ENCODE measurements at regions of chr17 and their contacts with region 1.

Region 1: DNA sequence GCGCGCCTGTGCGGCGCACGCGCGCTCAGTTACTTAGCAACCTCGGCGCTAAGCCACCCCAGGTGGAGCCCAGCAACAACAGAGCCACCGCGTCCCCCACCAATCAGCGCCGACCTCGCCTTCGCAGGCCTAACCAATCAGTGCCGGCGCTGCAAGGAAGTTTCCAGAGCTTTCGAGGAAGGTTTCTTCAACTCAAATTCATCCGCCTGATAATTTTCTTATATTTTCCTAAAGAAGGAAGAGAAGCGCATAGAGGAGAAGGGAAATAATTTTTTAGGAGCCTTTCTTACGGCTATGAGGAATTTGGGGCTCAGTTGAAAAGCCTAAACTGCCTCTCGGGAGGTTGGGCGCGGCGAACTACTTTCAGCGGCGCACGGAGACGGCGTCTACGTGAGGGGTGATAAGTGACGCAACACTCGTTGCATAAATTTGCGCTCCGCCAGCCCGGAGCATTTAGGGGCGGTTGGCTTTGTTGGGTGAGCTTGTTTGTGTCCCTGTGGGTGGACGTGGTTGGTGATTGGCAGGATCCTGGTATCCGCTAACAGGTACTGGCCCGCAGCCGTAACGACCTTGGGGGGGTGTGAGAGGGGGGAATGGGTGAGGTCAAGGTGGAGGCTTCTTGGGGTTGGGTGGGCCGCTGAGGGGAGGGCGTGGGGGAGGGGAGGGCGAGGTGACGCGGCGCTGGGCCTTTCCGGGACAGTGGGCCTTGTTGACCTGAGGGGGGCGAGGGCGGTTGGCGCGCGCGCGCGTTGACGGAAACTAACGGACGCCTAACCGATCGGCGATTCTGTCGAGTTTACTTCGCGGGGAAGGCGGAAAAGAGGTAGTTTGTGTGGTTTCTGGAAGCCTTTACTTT is at the start of gene UBB:
- DNase-seq: peak; percentile 83 to 97 (median 94)
- ATAC-seq: peak; percentile 96
- H3K4me3 ChIP-seq: peak within 1 kb of the TSS; percentile 66
- H3K4me3 Mint-ChIP-seq: peak within 1 kb of the TSS; percentile 85 to 99 (median 95)
- H3K27ac ChIP-seq: peak within 1 kb of the TSS; percentile 86
- H3K27ac Mint-ChIP-seq: peak within 1 kb of the TSS; percentile 93 to 100 (median 97)
- H3K4me1 ChIP-seq: peaks cover 6 to 13% of the 10 kb centered on the region in 2 donors
- H3K4me1 Mint-ChIP-seq: peaks cover 22 to 48% (median 39%) of the 10 kb centered on the region in 7 donors
- H3K27me3 ChIP-seq: no peaks in the 10 kb centered on the region
- H3K27me3 Mint-ChIP-seq: peaks cover 0 to 5% (median 0%) of the 10 kb centered on the region in 5 donors
- total RNA-seq, gene UBB: 537 to 1,283 (median 621) TPM

Region 2: GRCh38 chr17:15928348-15928740 is 452.5 kb before region 1 on chr17:
- CTCF ChIA-PET with region 1: no interaction called
- POLR2A ChIA-PET with region 1: no interaction called
- intact Hi-C with region 1: no loop called
- DNase-seq: no peak
- ATAC-seq: no peak
- H3K4me3 ChIP-seq: no peak overlapping the region
- H3K4me3 Mint-ChIP-seq: no peak overlapping the region
- H3K27ac ChIP-seq: no peak overlapping the region
- H3K27ac Mint-ChIP-seq: no peak overlapping the region
- H3K4me1 ChIP-seq: no peaks in the 10 kb centered on the region
- H3K4me1 Mint-ChIP-seq: peaks cover 0 to 17% (median 0%) of the 10 kb centered on the region in 7 donors
- H3K27me3 ChIP-seq: no peaks in the 10 kb centered on the region
- H3K27me3 Mint-ChIP-seq: peaks cover 13 to 39% (median 26%) of the 10 kb centered on the region in 5 donors

Region 3: GRCh38 chr17:16353317-16354174 is 27.3 kb before region 1 on chr17 and contains the start of gene CENPV:
- CTCF ChIA-PET with region 1: interaction called, 7 read pairs
- POLR2A ChIA-PET with region 1: interaction called, 14 read pairs
- intact Hi-C with region 1: loop called in 1 of 2 experiments (anchors 2 kb)
- DNase-seq: peak; percentile 62 to 76 (median 71)
- ATAC-seq: peak; percentile 96
- H3K4me3 ChIP-seq: peak within 1 kb of the TSS; percentile 78
- H3K4me3 Mint-ChIP-seq: peak within 1 kb of the TSS; percentile 89 to 98 (median 95)
- H3K27ac ChIP-seq: peak within 1 kb of the TSS; percentile 73
- H3K27ac Mint-ChIP-seq: peak within 1 kb of the TSS; percentile 73 to 98 (median 86)
- H3K4me1 ChIP-seq: peaks cover 4 to 5% of the 10 kb centered on the region in 2 donors
- H3K4me1 Mint-ChIP-seq: peaks cover 11 to 23% (median 19%) of the 10 kb centered on the region in 7 donors
- H3K27me3 ChIP-seq: no peaks in the 10 kb centered on the region
- H3K27me3 Mint-ChIP-seq: peaks cover 0 to 27% (median 0%) of the 10 kb centered on the region in 5 donors
- total RNA-seq, gene CENPV: 9.8 to 30.3 (median 21.7) TPM

Region 4: DNA sequence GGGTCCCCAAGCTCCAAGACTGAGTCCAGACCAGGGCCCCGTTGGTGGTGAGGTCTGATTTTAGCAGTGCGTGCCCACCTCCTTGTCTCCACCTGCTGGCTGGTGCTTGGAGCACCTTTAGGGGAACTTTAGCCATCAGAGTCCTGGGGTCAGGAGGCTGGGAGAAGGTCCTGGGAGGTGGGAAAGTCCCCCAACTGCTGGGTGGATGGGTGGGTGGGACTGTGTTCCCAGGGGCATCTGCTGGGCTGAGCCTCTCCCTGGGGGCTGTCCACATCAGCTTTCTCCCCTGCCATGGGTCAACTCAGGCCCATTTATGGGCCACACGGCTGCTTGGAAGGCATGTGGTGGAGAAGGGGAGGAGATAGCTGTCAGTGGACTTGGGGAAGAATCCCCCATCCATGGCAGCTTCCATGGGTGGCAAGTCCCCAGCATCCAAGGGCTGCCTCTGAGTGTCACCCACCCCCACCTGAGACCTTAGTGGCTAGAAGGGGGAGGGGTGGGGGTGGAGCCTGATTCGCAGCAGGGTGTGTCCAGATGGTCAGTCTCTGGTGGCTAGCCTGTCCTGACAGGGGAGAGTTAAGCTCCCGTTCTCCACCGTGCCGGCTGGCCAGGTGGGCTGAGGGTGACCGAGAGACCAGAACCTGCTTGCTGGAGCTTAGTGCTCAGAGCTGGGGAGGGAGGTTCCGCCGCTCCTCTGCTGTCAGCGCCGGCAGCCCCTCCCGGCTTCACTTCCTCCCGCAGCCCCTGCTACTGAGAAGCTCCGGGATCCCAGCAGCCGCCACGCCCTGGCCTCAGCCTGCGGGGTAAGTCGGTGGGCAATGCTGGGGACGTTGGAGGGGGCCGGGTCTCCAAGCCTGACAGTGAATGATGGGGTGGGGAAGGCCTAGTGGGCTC is 34.4 kb after region 1 on chr17 and contains the start of gene TRPV2:
- CTCF ChIA-PET with region 1: interaction called, 12 read pairs
- POLR2A ChIA-PET with region 1: interaction called, 36 read pairs
- intact Hi-C with region 1: loop called (anchors 1 kb)
- DNase-seq: peak in 8 of 9 donors; percentile 36 to 58 (median 47)
- ATAC-seq: peak; percentile 57
- H3K4me3 ChIP-seq: peak within 1 kb of the TSS; percentile 93
- H3K4me3 Mint-ChIP-seq: peak within 1 kb of the TSS; percentile 90 to 100 (median 98)
- H3K27ac ChIP-seq: peak within 1 kb of the TSS; percentile 94
- H3K27ac Mint-ChIP-seq: peak within 1 kb of the TSS; percentile 96 to 100 (median 98)
- H3K4me1 ChIP-seq: peaks cover 37 to 47% of the 10 kb centered on the region in 2 donors
- H3K4me1 Mint-ChIP-seq: peaks cover 33 to 55% (median 42%) of the 10 kb centered on the region in 7 donors
- H3K27me3 ChIP-seq: no peaks in the 10 kb centered on the region
- H3K27me3 Mint-ChIP-seq: no peaks in the 10 kb centered on the region
- total RNA-seq, gene TRPV2: 66.8 to 141 (median 80.0) TPM

Region 5: DNA sequence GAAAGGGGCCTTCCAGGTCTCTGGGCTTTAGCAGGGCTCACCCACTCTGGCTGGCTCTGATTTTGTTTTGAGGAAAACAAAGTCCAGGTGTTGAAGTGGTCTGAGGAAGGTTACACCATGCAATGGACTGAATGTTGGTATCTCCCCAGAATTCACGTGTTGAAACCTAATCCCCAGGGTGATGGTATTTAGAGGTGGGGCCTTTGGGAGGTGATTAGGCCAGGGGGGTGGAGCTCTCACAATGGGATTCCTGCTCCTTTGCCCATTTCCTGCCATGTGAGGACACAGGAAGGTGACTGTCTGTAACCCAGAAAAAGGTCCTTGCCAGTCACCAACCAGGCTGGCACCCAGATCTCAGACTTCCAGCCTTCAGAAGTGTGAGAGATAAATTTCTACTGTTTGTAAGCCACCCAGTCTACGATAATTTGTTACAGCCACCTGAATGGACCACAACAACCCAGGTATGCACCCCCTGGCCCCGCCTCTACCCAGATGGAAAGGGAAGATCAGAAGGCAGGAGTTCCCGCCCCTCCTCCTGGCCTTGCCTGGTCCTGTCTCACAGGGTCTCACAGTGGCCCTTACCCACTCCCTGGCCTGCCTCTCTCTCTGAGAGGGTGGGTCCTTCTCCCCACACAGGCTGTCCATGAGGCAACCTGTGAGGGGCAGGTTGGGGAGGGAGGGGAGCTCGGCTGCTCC is 79.1 kb after region 1 on chr17:
- CTCF ChIA-PET with region 1: no interaction called
- POLR2A ChIA-PET with region 1: no interaction called
- intact Hi-C with region 1: no loop called
- DNase-seq: peak in 1 of 9 donors; percentile 2
- ATAC-seq: no peak
- H3K4me3 ChIP-seq: no peak overlapping the region
- H3K4me3 Mint-ChIP-seq: no peak overlapping the region
- H3K27ac ChIP-seq: no peak overlapping the region
- H3K27ac Mint-ChIP-seq: no peak overlapping the region
- H3K4me1 ChIP-seq: no peaks in the 10 kb centered on the region
- H3K4me1 Mint-ChIP-seq: peaks cover 0 to 7% (median 4%) of the 10 kb centered on the region in 7 donors
- H3K27me3 ChIP-seq: no peaks in the 10 kb centered on the region
- H3K27me3 Mint-ChIP-seq: no peaks in the 10 kb centered on the region

Region 6: GRCh38 chr17:16521070-16521727 is 140.3 kb after region 1 on chr17:
- CTCF ChIA-PET with region 1: interaction called, 5 read pairs
- POLR2A ChIA-PET with region 1: interaction called, 3 read pairs
- intact Hi-C with region 1: loop called (anchors 1 kb)
- DNase-seq: peak; percentile 21 to 71 (median 62)
- ATAC-seq: peak; percentile 95
- H3K4me3 ChIP-seq: no peak overlapping the region
- H3K4me3 Mint-ChIP-seq: no peak overlapping the region
- H3K27ac ChIP-seq: no peak overlapping the region
- H3K27ac Mint-ChIP-seq: peak overlapping the region in 1 of 9 donors; percentile 2
- H3K4me1 ChIP-seq: no peaks in the 10 kb centered on the region
- H3K4me1 Mint-ChIP-seq: peaks cover 0 to 13% (median 5%) of the 10 kb centered on the region in 7 donors
- H3K27me3 ChIP-seq: no peaks in the 10 kb centered on the region
- H3K27me3 Mint-ChIP-seq: peaks cover 16 to 38% (median 24%) of the 10 kb centered on the region in 5 donors

Region 7: GRCh38 chr17:16639438-16639837 is 258.6 kb after region 1 on chr17:
- CTCF ChIA-PET with region 1: no interaction called
- POLR2A ChIA-PET with region 1: no interaction called
- intact Hi-C with region 1: no loop called
- DNase-seq: no peak
- ATAC-seq: no peak
- H3K4me3 ChIP-seq: no peak overlapping the region
- H3K4me3 Mint-ChIP-seq: no peak overlapping the region
- H3K27ac ChIP-seq: no peak overlapping the region
- H3K27ac Mint-ChIP-seq: no peak overlapping the region
- H3K4me1 ChIP-seq: no peaks in the 10 kb centered on the region
- H3K4me1 Mint-ChIP-seq: peaks cover 0 to 9% (median 2%) of the 10 kb centered on the region in 7 donors
- H3K27me3 ChIP-seq: no peaks in the 10 kb centered on the region
- H3K27me3 Mint-ChIP-seq: no peaks in the 10 kb centered on the region

Region 8: DNA sequence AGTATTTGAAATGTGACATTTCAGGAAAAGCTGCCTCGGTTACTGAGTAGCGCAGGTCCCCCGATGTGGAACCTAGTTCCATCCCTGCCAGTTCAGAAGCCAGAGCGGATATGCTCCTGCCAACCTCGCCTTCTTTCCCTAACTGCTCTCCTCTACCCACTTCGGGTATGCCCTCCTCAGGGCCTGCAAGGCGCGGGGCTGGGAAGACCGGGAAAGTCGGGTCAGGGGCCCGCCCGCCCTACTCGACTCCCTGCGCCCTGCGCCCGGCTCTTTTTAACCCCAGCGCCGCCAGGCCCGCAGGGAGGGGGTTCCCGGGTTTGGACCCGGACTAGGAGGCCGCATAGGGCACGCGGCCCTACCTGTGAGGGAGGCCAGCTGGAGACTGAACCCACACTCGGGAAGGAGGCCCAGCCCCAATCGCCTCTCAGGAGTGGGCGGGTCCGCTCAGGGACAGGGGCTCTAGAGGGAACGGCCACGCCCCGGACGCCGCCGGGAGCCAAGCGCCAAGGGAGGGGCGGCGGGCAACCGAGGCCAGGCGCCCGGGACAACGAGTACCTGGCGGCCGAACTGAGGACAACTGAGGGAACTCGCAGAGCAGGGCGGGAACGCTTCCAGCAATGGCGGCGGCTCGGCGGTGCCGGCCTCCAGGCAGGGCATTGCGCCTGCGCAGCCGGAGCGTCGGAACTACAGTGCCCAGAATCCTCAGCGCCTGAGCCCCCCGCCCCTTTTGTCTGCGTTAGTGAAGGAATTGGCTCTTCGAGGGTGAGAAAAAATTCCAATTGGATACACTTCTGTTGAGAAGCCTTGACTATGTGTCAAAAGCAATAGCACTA is 272.6 kb after region 1 on chr17 and contains the start of gene ZNF624:
- CTCF ChIA-PET with region 1: no interaction called
- POLR2A ChIA-PET with region 1: no interaction called
- intact Hi-C with region 1: loop called in 1 of 2 experiments (anchors 1 kb)
- DNase-seq: peak; percentile 75 to 87 (median 84)
- ATAC-seq: peak; percentile 98
- H3K4me3 ChIP-seq: peak within 1 kb of the TSS; percentile 76
- H3K4me3 Mint-ChIP-seq: peak within 1 kb of the TSS; percentile 81 to 93 (median 89)
- H3K27ac ChIP-seq: peak within 1 kb of the TSS; percentile 78
- H3K27ac Mint-ChIP-seq: peak within 1 kb of the TSS; percentile 7 to 91 (median 78)
- H3K4me1 ChIP-seq: peaks cover 0 to 11% of the 10 kb centered on the region in 2 donors
- H3K4me1 Mint-ChIP-seq: peaks cover 6 to 25% (median 21%) of the 10 kb centered on the region in 7 donors
- H3K27me3 ChIP-seq: no peaks in the 10 kb centered on the region
- H3K27me3 Mint-ChIP-seq: peaks cover 0 to 13% (median 0%) of the 10 kb centered on the region in 5 donors
- total RNA-seq, gene ZNF624: 3.8 to 11.4 (median 6.7) TPM